ENCODE measurements at regions of chr17 and their contacts with region 1.

Region 1: GRCh38 chr17:20026960-20027359 is 17.8 kb downstream of the SPECC1 start:
- DNase-seq: no peak
- ATAC-seq: no peak
- H3K4me3 Mint-ChIP-seq: no peak overlapping the region
- H3K27ac Mint-ChIP-seq: no peak overlapping the region
- H3K4me1 Mint-ChIP-seq: no peaks in the 10 kb centered on the region
- H3K27me3 Mint-ChIP-seq: peaks cover 6% of the 10 kb centered on the region

Region 2: DNA sequence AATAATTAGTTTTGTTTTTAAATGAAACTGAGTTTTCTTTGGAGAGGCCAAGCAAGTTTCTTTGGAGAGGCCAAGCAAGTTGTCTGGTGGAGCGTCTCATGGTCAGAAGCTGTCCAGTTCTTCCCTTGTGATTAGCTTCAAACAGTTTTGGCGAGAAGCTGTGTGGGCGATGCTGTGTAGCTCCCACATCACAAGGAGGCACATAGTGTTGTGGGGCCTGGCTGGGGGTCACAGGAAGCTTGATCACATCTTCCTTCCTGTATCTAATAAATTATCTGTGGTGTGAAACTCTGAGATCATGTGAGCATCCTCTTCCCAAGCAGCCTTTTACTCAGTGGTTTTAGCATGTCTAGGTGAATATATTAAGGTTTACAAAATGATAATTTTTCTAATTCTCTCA is 16.1 kb after region 1 on chr17:
- CTCF ChIA-PET with region 1: interaction called, 3 read pairs
- POLR2A ChIA-PET with region 1: no interaction called
- intact Hi-C with region 1: loop called in 1 of 2 experiments (anchors 1 kb)
- DNase-seq: no peak
- ATAC-seq: no peak
- H3K4me3 Mint-ChIP-seq: no peak overlapping the region
- H3K27ac Mint-ChIP-seq: no peak overlapping the region
- H3K4me1 Mint-ChIP-seq: peaks cover 3% of the 10 kb centered on the region
- H3K27me3 Mint-ChIP-seq: peaks cover 8% of the 10 kb centered on the region

Measured in activated CD4-positive, alpha-beta T cell treated with anti-CD3 and anti-CD28 coated beads for 36 hours (primary cell).